ENCODE measurements at regions of chr18 and their contacts with region 1.

Region 1: GRCh38 chr18:58180738-58181353 is 136.8 kb downstream of the NEDD4L start:
- DNase-seq: peak; percentile 44 to 53
- H3K4me3 ChIP-seq: no peak overlapping the region
- H3K4me3 Mint-ChIP-seq: no peak overlapping the region
- H3K27ac Mint-ChIP-seq: no peak overlapping the region
- H3K4me1 ChIP-seq: peaks cover 14% of the 10 kb centered on the region
- H3K4me1 Mint-ChIP-seq: peaks cover 20% of the 10 kb centered on the region
- H3K27me3 ChIP-seq: no peaks in the 10 kb centered on the region
- H3K27me3 Mint-ChIP-seq: no peaks in the 10 kb centered on the region
- CTCF ChIP-seq: peak; percentile 44 to 62

Region 2: GRCh38 chr18:58101291-58101794 is 79.5 kb before region 1 on chr18:
- CTCF ChIA-PET with region 1: no interaction called
- POLR2A ChIA-PET with region 1: no interaction called
- intact Hi-C with region 1: no loop called
- DNase-seq: no peak
- H3K4me3 ChIP-seq: no peak overlapping the region
- H3K4me3 Mint-ChIP-seq: no peak overlapping the region
- H3K27ac Mint-ChIP-seq: no peak overlapping the region
- H3K4me1 ChIP-seq: peaks cover 45% of the 10 kb centered on the region
- H3K4me1 Mint-ChIP-seq: peaks cover 8% of the 10 kb centered on the region
- H3K27me3 ChIP-seq: no peaks in the 10 kb centered on the region
- H3K27me3 Mint-ChIP-seq: no peaks in the 10 kb centered on the region
- CTCF ChIP-seq: no peak

Region 3: GRCh38 chr18:58135701-58136331 is 45.0 kb before region 1 on chr18:
- CTCF ChIA-PET with region 1: no interaction called
- POLR2A ChIA-PET with region 1: no interaction called
- intact Hi-C with region 1: loop called (anchors 5 kb)
- DNase-seq: peak; percentile 44 to 58
- H3K4me3 ChIP-seq: no peak overlapping the region
- H3K4me3 Mint-ChIP-seq: no peak overlapping the region
- H3K27ac Mint-ChIP-seq: no peak overlapping the region
- H3K4me1 ChIP-seq: no peaks in the 10 kb centered on the region
- H3K4me1 Mint-ChIP-seq: no peaks in the 10 kb centered on the region
- H3K27me3 ChIP-seq: no peaks in the 10 kb centered on the region
- H3K27me3 Mint-ChIP-seq: no peaks in the 10 kb centered on the region
- CTCF ChIP-seq: peak; percentile 47 to 54